Activated CD4-positive, alpha-beta memory T cell treated with anti-CD3 and anti-CD28 coated beads, Interleukin-2, amount 10 ng/mL, durations not matched to agents 7 days and 5 days (primary cell): ENCODE measurements at regions of chr12 and their contacts with region 1.

Region 1: GRCh38 chr12:119988782-119989668 is at the start of gene BICDL1:
- DNase-seq: peak; percentile 97
- H3K4me3 Mint-ChIP-seq: peak within 1 kb of the TSS; percentile 79
- H3K27ac Mint-ChIP-seq: peak within 1 kb of the TSS; percentile 82
- H3K4me1 Mint-ChIP-seq: peaks cover 40% of the 10 kb centered on the region
- H3K27me3 Mint-ChIP-seq: peaks cover 9% of the 10 kb centered on the region
- total RNA-seq, gene BICDL1: 44.6 to 44.7 TPM

Region 2: DNA sequence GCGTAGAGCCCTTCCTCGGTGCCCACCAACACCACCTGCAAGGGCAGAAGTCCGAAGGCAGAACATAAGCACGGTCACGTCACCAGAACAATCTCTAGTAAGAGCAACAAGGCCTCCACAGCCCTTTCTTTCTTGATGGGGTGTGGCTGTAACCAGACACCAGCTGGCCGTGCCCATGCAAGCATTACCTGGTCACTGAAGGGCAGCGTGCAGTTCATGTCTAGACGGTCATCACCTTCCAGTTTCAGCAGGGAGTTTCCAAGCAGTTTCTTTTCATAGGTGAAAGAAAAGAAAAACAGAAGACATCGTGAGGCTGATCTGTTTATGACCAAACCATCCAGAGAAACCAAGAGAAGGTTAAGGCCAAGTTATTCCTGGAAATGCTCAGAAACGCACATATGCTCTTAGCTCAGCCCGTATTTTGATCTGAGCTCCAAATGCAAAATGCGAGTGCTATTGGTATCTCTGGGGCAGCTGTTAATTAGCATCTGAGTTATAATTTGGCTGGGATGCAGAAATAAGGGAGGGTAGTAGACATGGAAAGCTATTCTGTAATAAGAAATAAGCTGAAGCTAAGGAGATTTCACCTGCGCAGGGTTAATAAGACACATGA is 278.6 kb before region 1 on chr12:
- CTCF ChIA-PET with region 1: no interaction called
- POLR2A ChIA-PET with region 1: no interaction called
- DNase-seq: no peak
- H3K4me3 Mint-ChIP-seq: no peak overlapping the region
- H3K27ac Mint-ChIP-seq: no peak overlapping the region
- H3K4me1 Mint-ChIP-seq: no peaks in the 10 kb centered on the region
- H3K27me3 Mint-ChIP-seq: no peaks in the 10 kb centered on the region

Region 3: GRCh38 chr12:120012067-120012621 is 23.1 kb after region 1 on chr12:
- CTCF ChIA-PET with region 1: interaction called, 29 read pairs
- POLR2A ChIA-PET with region 1: interaction called, 95 read pairs
- DNase-seq: peak; percentile 77
- H3K4me3 Mint-ChIP-seq: peak overlapping the region; percentile 60
- H3K27ac Mint-ChIP-seq: peak overlapping the region; percentile 88
- H3K4me1 Mint-ChIP-seq: peaks cover 77% of the 10 kb centered on the region
- H3K27me3 Mint-ChIP-seq: no peaks in the 10 kb centered on the region

Region 4: GRCh38 chr12:120055231-120056021 is 66.4 kb after region 1 on chr12:
- CTCF ChIA-PET with region 1: no interaction called
- POLR2A ChIA-PET with region 1: no interaction called
- DNase-seq: no peak
- H3K4me3 Mint-ChIP-seq: no peak overlapping the region
- H3K27ac Mint-ChIP-seq: no peak overlapping the region
- H3K4me1 Mint-ChIP-seq: peaks cover 9% of the 10 kb centered on the region
- H3K27me3 Mint-ChIP-seq: no peaks in the 10 kb centered on the region